Ovary (tissue), 10 donors: ENCODE measurements at regions of chr7 and their contacts with region 1.

Region 1: GRCh38 chr7:113784316-113784715 is 134.5 kb downstream of the PPP1R3A start:
- DNase-seq: no peak
- H3K4me3 ChIP-seq: no peak overlapping the region
- H3K27ac ChIP-seq: no peak overlapping the region
- H3K4me1 ChIP-seq: no peaks in the 10 kb centered on the region
- H3K27me3 ChIP-seq: no peaks in the 10 kb centered on the region
- CTCF ChIP-seq: no peak
- EP300 ChIP-seq: no peak
- POLR2A ChIP-seq: no peak

Region 2: DNA sequence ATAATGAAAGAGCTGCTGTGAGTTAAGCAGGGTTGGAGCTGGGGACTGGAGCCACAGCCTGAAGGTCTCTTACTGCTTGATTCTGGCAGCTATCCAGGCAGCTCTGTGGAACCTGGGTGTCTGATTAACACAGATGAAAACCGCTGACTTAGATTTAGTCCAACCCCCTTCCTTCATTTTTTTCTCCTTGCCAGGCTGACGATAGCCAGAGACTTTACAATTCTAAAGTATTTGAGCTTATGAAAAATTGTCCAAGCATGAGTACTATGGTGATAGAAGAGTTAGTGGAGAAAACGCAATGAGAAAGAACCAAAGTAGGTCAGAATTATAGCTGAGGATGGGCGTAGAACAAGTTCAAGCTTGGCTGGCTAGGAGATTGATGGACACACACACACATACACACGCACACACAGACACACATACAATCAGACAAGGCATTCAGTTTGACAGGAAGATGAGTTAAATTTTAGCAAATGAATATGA is 684.2 kb before region 1 on chr7:
- intact Hi-C with region 1: loop called in 1 of 4 experiments (anchors 10 kb)
- DNase-seq: peak in 3 of 5 donors; percentile 25 to 43 (median 30)
- H3K4me3 ChIP-seq: no peak overlapping the region
- H3K27ac ChIP-seq: no peak overlapping the region
- H3K4me1 ChIP-seq: no peaks in the 10 kb centered on the region
- H3K27me3 ChIP-seq: no peaks in the 10 kb centered on the region
- CTCF ChIP-seq: no peak
- EP300 ChIP-seq: no peak
- POLR2A ChIP-seq: no peak

Region 3: DNA sequence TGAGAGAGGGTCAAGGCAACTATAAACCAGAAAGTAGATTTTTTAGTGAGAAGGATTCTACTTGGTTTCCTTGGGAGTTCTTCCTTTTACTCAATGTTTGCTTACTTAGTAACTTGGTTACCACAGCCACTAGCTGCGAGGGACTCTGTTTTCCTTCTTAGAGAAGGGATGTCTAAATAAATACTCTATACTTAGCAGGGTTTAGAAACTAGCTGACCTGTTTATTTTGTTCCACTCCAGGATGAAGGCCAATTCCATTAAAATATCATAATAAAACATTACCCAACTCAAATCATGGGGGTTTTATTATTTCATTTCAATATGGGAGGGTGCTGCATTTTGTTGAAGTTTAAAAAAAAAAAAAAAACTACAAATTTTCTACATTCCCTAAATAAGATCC is 47.2 kb after region 1 on chr7:
- intact Hi-C with region 1: no loop called
- DNase-seq: no peak
- H3K4me3 ChIP-seq: no peak overlapping the region
- H3K27ac ChIP-seq: no peak overlapping the region
- H3K4me1 ChIP-seq: no peaks in the 10 kb centered on the region
- H3K27me3 ChIP-seq: no peaks in the 10 kb centered on the region
- CTCF ChIP-seq: no peak
- EP300 ChIP-seq: no peak
- POLR2A ChIP-seq: no peak